Activated CD4-positive, alpha-beta memory T cell treated with anti-CD3 and anti-CD28 coated beads for 36 hours (primary cell): ENCODE measurements at regions of chr9 and their contacts with region 1.

Region 1: DNA sequence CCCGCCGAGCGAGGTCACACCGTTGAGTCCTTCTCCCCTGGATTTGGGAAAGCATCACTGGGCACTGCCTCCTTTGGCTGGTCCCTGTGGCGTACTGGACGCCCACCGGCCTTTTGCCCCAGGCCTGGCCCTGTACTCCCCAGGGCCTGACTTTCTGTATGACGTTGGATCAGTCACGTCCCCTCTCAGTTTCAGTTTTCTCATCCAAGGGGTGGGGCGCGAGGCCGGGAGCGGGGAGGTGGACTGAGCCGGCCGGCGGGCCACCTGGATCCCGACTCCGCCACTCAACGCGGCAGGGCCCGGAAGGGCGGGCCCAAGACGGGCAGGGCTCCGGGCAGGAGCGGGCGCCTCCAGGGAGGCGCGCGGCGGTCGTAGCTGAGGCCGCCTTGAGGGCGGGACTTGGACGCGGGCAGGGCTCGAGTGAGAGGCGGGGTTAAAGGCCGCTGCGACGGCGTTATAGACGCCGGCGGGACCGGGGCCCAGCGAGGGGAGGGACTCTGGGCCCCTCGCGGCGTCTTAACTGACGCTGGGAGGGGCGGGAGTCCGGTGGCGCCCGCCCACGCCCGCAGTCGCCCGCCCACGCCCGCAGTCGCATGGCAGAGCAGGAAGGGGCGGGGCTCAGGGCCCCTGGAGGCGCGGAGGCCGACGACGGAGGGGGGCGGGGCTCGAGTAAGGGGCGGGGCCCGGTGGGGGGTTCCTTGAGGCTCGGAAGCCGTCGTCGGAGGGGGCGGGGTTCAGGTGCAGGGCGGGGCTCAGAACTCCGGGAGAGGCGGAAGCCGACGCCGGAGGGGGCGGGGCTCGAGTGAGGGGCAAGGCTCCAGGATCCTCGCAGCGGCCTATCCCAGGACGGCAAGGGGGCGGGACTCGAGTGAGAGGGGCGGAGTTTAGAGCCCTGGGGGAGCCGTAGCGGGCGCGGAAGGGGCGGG is 549 bp upstream of the CARD19 start:
- DNase-seq: peak; percentile 100
- H3K4me3 Mint-ChIP-seq: peak overlapping the region; percentile 83
- H3K27ac Mint-ChIP-seq: peak overlapping the region; percentile 98
- H3K4me1 Mint-ChIP-seq: peaks cover 73% of the 10 kb centered on the region
- H3K27me3 Mint-ChIP-seq: no peaks in the 10 kb centered on the region

Region 2: GRCh38 chr9:92764988-92765936 is 330.2 kb before region 1 on chr9:
- CTCF ChIA-PET with region 1: no interaction called
- POLR2A ChIA-PET with region 1: no interaction called
- intact Hi-C with region 1: loop called (anchors 10 kb)
- DNase-seq: peak; percentile 99
- H3K4me3 Mint-ChIP-seq: peak overlapping the region; percentile 82
- H3K27ac Mint-ChIP-seq: peak overlapping the region; percentile 79
- H3K4me1 Mint-ChIP-seq: peaks cover 48% of the 10 kb centered on the region
- H3K27me3 Mint-ChIP-seq: no peaks in the 10 kb centered on the region

Region 3: GRCh38 chr9:92963831-92964626 is 131.4 kb before region 1 on chr9:
- CTCF ChIA-PET with region 1: no interaction called
- POLR2A ChIA-PET with region 1: interaction called, 3 read pairs
- intact Hi-C with region 1: loop called (anchors 5 kb)
- DNase-seq: peak; percentile 86
- H3K4me3 Mint-ChIP-seq: peak overlapping the region; percentile 96
- H3K27ac Mint-ChIP-seq: peak overlapping the region; percentile 100
- H3K4me1 Mint-ChIP-seq: peaks cover 57% of the 10 kb centered on the region
- H3K27me3 Mint-ChIP-seq: no peaks in the 10 kb centered on the region

Region 4: GRCh38 chr9:93082841-93083411 is 12.5 kb before region 1 on chr9:
- CTCF ChIA-PET with region 1: no interaction called
- POLR2A ChIA-PET with region 1: interaction called, 10 read pairs
- intact Hi-C with region 1: loop called (anchors 1 kb)
- DNase-seq: peak; percentile 45
- H3K4me3 Mint-ChIP-seq: no peak overlapping the region
- H3K27ac Mint-ChIP-seq: peak overlapping the region; percentile 98
- H3K4me1 Mint-ChIP-seq: peaks cover 42% of the 10 kb centered on the region
- H3K27me3 Mint-ChIP-seq: no peaks in the 10 kb centered on the region

Region 5: DNA sequence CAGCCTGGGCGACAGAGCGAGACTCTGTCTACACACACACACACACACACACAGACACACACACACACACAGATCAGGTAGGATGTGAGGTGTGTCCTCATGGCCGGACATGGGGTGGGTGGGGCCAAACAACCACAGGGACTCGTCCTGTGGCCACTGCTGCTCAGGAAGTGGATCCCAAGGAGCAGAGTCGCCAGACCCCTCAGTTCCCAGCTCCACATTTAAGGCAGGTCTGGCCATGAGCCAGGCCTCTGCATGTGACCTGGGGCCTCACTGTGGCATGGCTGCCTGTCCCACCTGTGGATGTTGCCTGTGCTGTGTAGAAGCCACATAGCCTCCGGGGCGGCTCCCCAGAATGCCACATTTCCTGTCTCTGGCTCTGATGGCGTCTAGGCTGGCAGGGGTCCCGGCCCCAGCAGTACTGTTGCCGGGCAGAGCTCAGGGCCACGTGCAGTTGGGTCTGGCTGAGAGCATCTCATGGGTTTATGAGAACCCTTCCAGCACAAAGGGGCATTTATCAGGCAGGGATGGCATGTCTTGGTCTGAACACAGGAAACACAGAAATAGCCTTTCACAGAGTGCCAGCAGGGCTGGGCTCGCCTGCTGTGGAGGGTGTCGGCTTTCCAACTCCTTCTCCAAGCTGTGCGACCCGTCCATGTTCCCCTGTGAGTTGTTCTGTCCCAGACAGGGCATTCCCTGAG is 48.5 kb after region 1 on chr9:
- CTCF ChIA-PET with region 1: no interaction called
- POLR2A ChIA-PET with region 1: no interaction called
- intact Hi-C with region 1: loop called (anchors 5 kb)
- DNase-seq: peak; percentile 63
- H3K4me3 Mint-ChIP-seq: no peak overlapping the region
- H3K27ac Mint-ChIP-seq: peak overlapping the region; percentile 82
- H3K4me1 Mint-ChIP-seq: peaks cover 59% of the 10 kb centered on the region
- H3K27me3 Mint-ChIP-seq: no peaks in the 10 kb centered on the region

Region 6: GRCh38 chr9:93566408-93567270 is 471.2 kb after region 1 on chr9:
- CTCF ChIA-PET with region 1: no interaction called
- POLR2A ChIA-PET with region 1: no interaction called
- intact Hi-C with region 1: loop called (anchors 5 kb)
- DNase-seq: peak; percentile 99
- H3K4me3 Mint-ChIP-seq: peak overlapping the region; percentile 86
- H3K27ac Mint-ChIP-seq: peak overlapping the region; percentile 88
- H3K4me1 Mint-ChIP-seq: peaks cover 25% of the 10 kb centered on the region
- H3K27me3 Mint-ChIP-seq: no peaks in the 10 kb centered on the region